T-cell (primary cell): ENCODE measurements at regions of chr20 and their contacts with region 1.

Region 1: DNA sequence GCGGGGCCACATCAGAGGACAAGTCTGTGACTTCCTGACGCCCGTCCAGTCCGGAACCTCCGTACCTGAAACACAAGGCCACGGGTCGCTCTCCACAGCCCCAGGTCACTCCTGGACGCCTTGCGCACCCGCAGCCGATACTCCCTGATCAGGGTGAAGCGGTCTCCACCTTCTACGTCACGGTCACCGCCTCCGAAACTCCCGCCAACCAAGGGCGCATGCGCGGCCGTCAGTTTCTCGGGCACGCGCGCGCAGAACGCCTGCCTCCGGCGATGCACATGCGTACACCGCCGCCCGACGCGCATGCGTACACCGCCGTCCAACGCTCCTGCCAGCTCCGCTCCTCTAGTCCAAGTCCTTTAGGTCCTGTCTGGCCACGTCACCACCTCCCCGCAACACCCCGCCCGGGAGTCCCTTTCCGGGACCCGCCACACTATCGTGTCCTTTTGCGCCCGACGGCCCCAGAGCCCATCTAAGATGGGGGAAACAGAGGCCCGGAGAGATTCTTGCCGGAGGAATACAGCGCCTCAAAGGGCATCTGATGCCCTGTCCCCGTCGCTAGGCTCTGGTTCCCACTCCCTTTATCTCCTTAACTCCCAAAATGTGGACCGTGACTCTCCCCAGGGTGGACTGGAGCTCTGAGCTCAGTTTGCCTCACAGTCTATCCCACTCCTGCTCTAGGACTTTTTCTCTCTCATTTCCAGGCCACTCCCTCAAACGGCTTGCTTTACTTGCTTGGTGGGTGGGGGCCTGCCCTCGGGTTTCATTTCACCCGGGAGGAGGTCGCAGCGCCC is at the start of gene DSN1:
- DNase-seq: peak; percentile 89 to 99 (median 95)
- ATAC-seq: peak; percentile 83 to 89 (median 88)
- H3K4me3 ChIP-seq: peak within 1 kb of the TSS; percentile 95 to 96
- H3K4me3 Mint-ChIP-seq: peak within 1 kb of the TSS; percentile 83 to 99 (median 97)
- H3K27ac ChIP-seq: peak within 1 kb of the TSS; percentile 94
- H3K27ac Mint-ChIP-seq: peak within 1 kb of the TSS; percentile 97 to 99
- H3K4me1 ChIP-seq: peaks cover 2 to 21% of the 10 kb centered on the region in 2 experiments
- H3K4me1 Mint-ChIP-seq: peaks cover 18 to 23% (median 19%) of the 10 kb centered on the region in 3 donors
- H3K27me3 ChIP-seq: peaks cover 0 to 4% of the 10 kb centered on the region in 2 experiments
- H3K27me3 Mint-ChIP-seq: peaks cover 0 to 2% of the 10 kb centered on the region in 2 donors
- total RNA-seq, gene DSN1: 10.1 to 13.6 (median 11.1) TPM

Region 2: DNA sequence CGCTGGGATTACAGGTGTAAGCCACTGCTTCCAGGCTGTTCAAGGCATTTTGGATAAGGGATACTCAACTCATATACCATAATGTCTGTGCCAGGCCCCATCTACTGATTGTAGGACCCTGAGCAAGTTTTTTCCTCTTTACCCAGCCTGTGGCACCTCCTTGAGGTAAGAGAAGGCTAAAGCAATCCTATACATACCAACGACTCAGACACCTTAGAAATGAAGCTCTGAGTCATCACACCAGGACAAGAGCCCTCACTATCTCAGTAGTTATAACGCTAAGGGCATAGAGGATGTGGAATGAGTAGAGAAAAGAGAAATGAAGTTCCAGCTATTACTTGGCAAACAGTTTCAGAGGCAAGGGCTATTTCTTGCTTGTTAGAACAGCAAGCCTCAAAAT is 44.8 kb before region 1 on chr20:
- CTCF ChIA-PET with region 1: no interaction called
- POLR2A ChIA-PET with region 1: no interaction called
- DNase-seq: peak in 1 of 35 experiments; percentile 12
- ATAC-seq: no peak
- H3K4me3 ChIP-seq: no peak overlapping the region
- H3K4me3 Mint-ChIP-seq: no peak overlapping the region
- H3K27ac ChIP-seq: no peak overlapping the region
- H3K27ac Mint-ChIP-seq: no peak overlapping the region
- H3K4me1 ChIP-seq: peaks cover 3 to 19% of the 10 kb centered on the region in 2 experiments
- H3K4me1 Mint-ChIP-seq: peaks cover 15 to 26% (median 16%) of the 10 kb centered on the region in 3 donors
- H3K27me3 ChIP-seq: no peaks in the 10 kb centered on the region
- H3K27me3 Mint-ChIP-seq: no peaks in the 10 kb centered on the region

Region 3: DNA sequence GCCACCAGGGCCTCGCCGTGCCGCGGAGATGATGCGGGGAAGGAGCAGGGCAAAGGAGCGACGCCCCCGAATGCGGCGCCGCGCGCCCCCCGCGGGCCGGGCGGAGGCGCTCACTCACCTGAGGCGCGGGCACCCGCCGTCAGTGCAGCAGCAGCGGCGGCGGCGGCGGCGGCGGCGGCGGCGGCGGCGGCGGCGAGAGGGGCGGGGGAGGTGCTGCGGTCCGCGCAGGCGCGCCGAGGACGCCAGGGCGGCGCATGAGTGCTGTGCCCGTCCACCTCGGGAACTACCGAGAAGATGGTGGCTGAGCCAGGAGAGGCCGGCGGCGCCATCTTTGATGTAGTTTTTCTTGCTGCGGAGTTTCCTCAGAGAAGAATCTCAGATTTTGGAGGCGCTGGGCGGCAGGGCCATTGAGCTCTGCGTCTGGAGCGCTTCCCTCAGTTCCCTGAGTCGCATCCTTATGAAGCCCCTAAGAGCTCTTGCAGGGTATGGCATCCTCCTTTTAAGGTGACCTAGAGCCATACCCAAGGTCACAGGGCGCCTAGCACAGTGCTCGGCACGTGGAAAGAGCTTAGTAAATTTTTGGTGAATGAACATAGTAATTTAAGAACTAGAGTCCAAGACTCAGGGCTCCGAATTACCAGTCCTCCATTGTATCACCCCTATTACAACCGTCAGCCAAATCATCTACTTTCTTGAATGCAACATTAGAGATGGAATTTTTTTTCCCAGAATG is 27.7 kb before region 1 on chr20 and contains the start of gene NDRG3:
- CTCF ChIA-PET with region 1: interaction called, 4 to 13 read pairs
- POLR2A ChIA-PET with region 1: no interaction called
- DNase-seq: peak; percentile 76 to 97 (median 91)
- ATAC-seq: peak; percentile 97 to 99 (median 98)
- H3K4me3 ChIP-seq: peak within 1 kb of the TSS; percentile 76 to 80
- H3K4me3 Mint-ChIP-seq: peak within 1 kb of the TSS; percentile 88 to 91 (median 90)
- H3K27ac ChIP-seq: peak within 1 kb of the TSS; percentile 48
- H3K27ac Mint-ChIP-seq: peak within 1 kb of the TSS; percentile 87 to 91
- H3K4me1 ChIP-seq: peaks cover 2 to 18% of the 10 kb centered on the region in 2 experiments
- H3K4me1 Mint-ChIP-seq: peaks cover 24 to 34% (median 31%) of the 10 kb centered on the region in 3 donors
- H3K27me3 ChIP-seq: no peaks in the 10 kb centered on the region
- H3K27me3 Mint-ChIP-seq: no peaks in the 10 kb centered on the region
- total RNA-seq, gene NDRG3: 25.8 to 29.5 (median 28.3) TPM

Region 4: GRCh38 chr20:36808317-36809257 is 34.8 kb after region 1 on chr20:
- CTCF ChIA-PET with region 1: interaction called, 6 to 11 read pairs
- POLR2A ChIA-PET with region 1: no interaction called
- DNase-seq: peak; percentile 11 to 81 (median 56)
- ATAC-seq: peak in 3 of 4 experiments; percentile 30 to 50 (median 50)
- H3K4me3 ChIP-seq: no peak overlapping the region
- H3K4me3 Mint-ChIP-seq: no peak overlapping the region
- H3K27ac ChIP-seq: no peak overlapping the region
- H3K27ac Mint-ChIP-seq: peak overlapping the region in 1 of 2 donors; percentile 43
- H3K4me1 ChIP-seq: no peaks in the 10 kb centered on the region
- H3K4me1 Mint-ChIP-seq: peaks cover 0 to 4% (median 2%) of the 10 kb centered on the region in 3 donors
- H3K27me3 ChIP-seq: peaks cover 0 to under 1% of the 10 kb centered on the region in 2 experiments
- H3K27me3 Mint-ChIP-seq: no peaks in the 10 kb centered on the region